Colonic mucosa (tissue), 4 donors: ENCODE measurements at regions of chr4 and their contacts with region 1.

Region 1: DNA sequence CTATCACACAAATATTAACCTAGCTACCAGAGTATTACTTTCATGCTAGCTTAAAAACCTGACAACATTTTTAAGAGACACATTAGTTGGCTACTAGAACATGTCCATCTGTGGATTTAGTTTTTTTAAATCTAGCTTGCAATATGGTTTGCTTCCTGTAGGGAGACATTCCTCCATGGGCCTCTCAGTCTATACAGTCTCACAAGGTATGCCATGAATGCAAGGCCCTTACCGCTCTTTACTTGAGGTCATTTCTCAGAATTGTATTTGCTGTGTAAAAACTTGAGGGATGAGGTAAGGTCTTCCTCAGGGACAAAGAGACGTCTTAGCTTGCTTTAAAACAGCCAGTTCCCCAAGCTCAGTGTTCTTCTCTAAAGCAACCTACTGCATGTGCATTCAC is 26.9 kb downstream of the UBA6 start:
- DNase-seq: no peak
- H3K4me3 ChIP-seq: no peak overlapping the region
- H3K27ac ChIP-seq: no peak overlapping the region
- H3K4me1 ChIP-seq: no peaks in the 10 kb centered on the region
- H3K27me3 ChIP-seq: no peaks in the 10 kb centered on the region
- CTCF ChIP-seq: no peak

Region 2: DNA sequence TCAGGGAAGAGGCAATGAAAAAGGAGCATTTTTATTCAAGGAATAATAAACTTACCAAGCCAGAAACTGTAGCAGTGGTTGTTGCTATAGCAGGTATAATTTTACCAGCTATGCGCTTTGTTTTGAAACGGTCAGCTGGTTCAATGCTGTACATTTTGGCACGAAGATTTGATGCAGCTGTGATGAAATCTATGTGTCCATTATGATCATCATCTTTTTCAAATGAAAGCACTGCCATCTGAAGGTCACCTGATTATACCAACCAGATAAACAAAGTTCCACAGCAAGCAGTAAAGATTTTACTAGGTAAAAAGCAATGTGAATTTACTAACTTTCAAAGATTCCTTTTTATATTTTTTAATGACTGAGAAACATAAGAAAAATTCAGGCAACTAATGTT is 49.2 kb before region 1 on chr4:
- intact Hi-C with region 1: loop called (anchors 10 kb)
- DNase-seq: no peak
- H3K4me3 ChIP-seq: no peak overlapping the region
- H3K27ac ChIP-seq: no peak overlapping the region
- H3K4me1 ChIP-seq: no peaks in the 10 kb centered on the region
- H3K27me3 ChIP-seq: no peaks in the 10 kb centered on the region
- CTCF ChIP-seq: no peak